ENCODE measurements at regions of chr4 and their contacts with region 1.

Region 1: DNA sequence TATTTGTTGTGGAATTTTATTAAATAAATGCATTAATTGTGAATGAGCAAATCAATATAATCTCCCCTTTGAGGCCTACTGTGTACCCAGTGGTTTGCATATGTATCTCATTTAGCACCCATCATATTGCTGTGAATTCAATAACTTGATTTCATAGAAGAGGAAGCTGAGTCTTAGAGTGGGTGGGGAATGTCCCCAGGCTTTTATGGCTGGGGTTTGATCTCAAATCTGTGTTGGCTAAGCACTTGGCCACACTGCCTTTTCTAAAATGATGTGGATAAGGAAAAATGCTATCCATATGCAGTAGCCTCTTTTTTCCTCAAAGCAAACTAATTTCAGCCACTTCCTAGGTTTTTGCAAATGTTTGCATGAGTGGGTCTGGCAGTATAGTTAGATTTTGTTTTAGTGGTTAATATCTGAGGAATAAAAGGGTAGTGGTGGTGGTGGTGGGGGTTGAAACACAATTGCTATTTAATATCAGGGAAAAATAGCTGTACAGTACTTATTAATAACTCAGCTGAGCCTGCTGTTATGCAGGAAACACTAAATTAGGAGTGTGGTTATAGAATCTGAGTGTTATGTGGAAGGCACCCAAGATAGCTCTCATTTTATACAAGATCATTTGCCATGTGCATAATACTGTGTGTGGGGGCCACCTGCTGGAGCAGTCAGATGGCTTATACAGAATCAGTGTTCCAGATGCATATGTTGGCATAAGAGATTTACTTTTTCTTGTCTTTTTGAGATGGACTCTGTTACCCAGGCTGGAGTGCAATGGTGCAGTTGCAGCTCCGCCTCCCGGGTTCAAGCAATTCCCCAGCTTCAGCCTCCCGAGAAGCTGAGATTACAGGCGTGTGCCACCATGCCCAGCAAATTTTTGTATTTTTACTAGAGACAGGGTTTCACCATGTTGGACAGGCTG is 108.0 kb downstream of the TMEM131L start:
- DNase-seq: peak; percentile 29 to 84 (median 73)
- ATAC-seq: peak; percentile 96
- H3K4me3 ChIP-seq: no peak overlapping the region
- H3K4me3 Mint-ChIP-seq: peak overlapping the region; percentile 9
- H3K27ac ChIP-seq: peak overlapping the region in 1 of 2 experiments; percentile 29
- H3K27ac Mint-ChIP-seq: peak overlapping the region; percentile 81
- H3K4me1 ChIP-seq: peaks cover 27% of the 10 kb centered on the region
- H3K4me1 Mint-ChIP-seq: peaks cover 61% of the 10 kb centered on the region
- H3K27me3 ChIP-seq: no peaks in the 10 kb centered on the region
- H3K27me3 Mint-ChIP-seq: no peaks in the 10 kb centered on the region
- CTCF ChIP-seq: peak; percentile 73

Region 2: GRCh38 chr4:153142700-153143438 is 431.3 kb before region 1 on chr4:
- CTCF ChIA-PET with region 1: interaction called, 5 read pairs
- POLR2A ChIA-PET with region 1: no interaction called
- intact Hi-C with region 1: loop called (anchors 2 to 5 kb)
- DNase-seq: peak in 8 of 9 experiments; percentile 19 to 70 (median 50)
- ATAC-seq: peak; percentile 68
- H3K4me3 ChIP-seq: no peak overlapping the region
- H3K4me3 Mint-ChIP-seq: no peak overlapping the region
- H3K27ac ChIP-seq: no peak overlapping the region
- H3K27ac Mint-ChIP-seq: no peak overlapping the region
- H3K4me1 ChIP-seq: no peaks in the 10 kb centered on the region
- H3K4me1 Mint-ChIP-seq: no peaks in the 10 kb centered on the region
- H3K27me3 ChIP-seq: no peaks in the 10 kb centered on the region
- H3K27me3 Mint-ChIP-seq: peaks cover 5% of the 10 kb centered on the region
- CTCF ChIP-seq: peak; percentile 62

Region 3: DNA sequence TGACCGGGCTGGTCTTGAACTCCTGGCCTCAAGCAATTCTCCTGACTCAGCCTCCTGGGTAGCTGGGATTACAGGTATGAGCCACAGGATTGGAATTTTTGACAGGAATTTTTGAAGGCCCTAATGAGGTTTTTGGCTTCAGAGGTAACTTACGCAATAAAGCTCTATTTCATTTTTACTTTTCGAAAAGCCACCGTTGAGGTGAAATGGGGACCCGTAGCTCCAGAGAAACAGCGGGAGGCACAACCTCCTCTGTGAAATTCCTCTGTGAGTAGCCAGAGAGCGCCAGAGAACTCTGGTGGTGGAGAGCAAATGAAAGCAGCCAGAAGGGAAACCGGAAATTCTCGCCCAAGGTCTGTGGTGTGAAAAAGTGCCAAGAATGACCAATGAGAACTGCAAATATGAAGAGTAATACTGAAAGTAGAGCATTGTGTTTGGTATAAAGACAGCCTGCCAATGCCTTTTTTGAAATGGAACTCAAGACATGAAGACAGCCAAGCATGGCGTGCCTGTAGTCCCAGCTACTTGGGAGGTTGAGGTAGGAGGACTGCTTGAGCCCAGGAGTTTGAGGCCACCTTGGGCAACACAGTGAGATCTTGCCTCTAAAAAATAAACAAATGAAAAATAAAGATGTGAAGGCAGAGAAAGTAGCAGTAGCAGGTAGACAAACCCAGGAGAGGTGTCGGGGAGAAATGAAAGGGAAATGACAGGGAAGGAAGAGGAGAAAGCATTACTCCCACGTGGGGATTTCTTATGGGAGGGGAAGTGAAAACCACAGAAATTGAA is 141.0 kb before region 1 on chr4:
- CTCF ChIA-PET with region 1: interaction called, 38 read pairs
- POLR2A ChIA-PET with region 1: interaction called, 8 read pairs
- intact Hi-C with region 1: loop called (anchors 1 kb)
- DNase-seq: peak; percentile 29 to 88 (median 61)
- ATAC-seq: peak; percentile 78
- H3K4me3 ChIP-seq: peak overlapping the region; percentile 0 to 46
- H3K4me3 Mint-ChIP-seq: peak overlapping the region; percentile 77
- H3K27ac ChIP-seq: peak overlapping the region; percentile 6 to 63
- H3K27ac Mint-ChIP-seq: peak overlapping the region; percentile 73
- H3K4me1 ChIP-seq: peaks cover 52% of the 10 kb centered on the region
- H3K4me1 Mint-ChIP-seq: peaks cover 72% of the 10 kb centered on the region
- H3K27me3 ChIP-seq: no peaks in the 10 kb centered on the region
- H3K27me3 Mint-ChIP-seq: no peaks in the 10 kb centered on the region
- CTCF ChIP-seq: peak; percentile 59

Region 4: GRCh38 chr4:153466081-153466948 is 107.8 kb before region 1 on chr4 and contains the start of gene TMEM131L:
- CTCF ChIA-PET with region 1: interaction called, 36 read pairs
- POLR2A ChIA-PET with region 1: interaction called, 26 read pairs
- intact Hi-C with region 1: loop called (anchors 1 to 10 kb)
- DNase-seq: peak; percentile 58 to 92 (median 69)
- ATAC-seq: peak; percentile 77
- H3K4me3 ChIP-seq: peak within 1 kb of the TSS; percentile 77 to 94
- H3K4me3 Mint-ChIP-seq: peak within 1 kb of the TSS; percentile 95
- H3K27ac ChIP-seq: peak within 1 kb of the TSS; percentile 76 to 92
- H3K27ac Mint-ChIP-seq: peak within 1 kb of the TSS; percentile 96
- H3K4me1 ChIP-seq: peaks cover 40% of the 10 kb centered on the region
- H3K4me1 Mint-ChIP-seq: peaks cover 44% of the 10 kb centered on the region
- H3K27me3 ChIP-seq: no peaks in the 10 kb centered on the region
- H3K27me3 Mint-ChIP-seq: no peaks in the 10 kb centered on the region
- CTCF ChIP-seq: peak; percentile 35
- total RNA-seq, gene TMEM131L: 80.8 to 83.1 TPM

Region 5: DNA sequence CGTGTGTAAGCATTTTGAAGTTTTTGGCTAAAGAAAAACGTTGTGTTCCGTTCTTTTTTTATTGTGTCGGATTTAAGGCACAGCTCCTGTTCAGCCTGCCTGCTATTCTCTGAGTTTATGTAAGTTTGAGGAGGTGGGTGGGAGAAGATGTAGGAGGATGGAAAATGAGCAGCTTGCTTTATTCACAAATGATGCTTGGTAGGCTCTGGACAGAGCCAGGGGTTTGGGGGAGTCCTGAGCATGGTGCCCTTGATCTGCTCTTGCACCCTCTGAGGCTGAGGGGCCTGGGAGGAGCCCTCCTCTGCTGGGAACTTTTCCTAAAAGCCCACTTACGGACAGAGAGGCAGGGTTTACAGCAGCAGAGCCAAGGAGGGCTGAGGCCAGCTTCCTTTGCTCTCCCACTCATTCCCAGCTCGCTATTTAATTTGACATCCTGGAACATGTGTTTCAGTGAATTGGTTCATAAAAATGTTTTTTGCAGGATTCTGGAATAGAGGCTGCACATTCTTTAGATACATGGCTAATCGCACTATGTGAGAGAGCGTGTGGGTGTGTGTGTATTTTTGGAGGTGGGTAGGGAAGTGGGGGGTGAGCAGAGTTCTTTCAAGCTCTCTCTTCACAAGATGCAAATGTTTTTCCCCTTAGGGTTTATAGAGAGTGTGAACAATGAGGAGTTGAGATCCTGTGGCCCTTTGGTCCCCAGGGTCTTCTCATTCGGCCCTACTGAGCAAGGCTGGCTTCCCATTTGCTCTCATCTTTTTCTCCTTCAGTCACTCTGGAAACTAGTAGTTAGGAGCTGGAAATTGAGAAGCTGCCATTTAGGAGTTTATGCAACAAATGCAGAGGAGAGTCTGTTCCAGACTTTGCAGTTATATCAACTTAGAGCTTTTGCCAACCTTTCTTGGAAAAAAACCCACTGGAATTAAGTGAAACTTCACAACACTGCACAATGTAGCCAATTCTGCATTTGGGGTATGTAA is 75.9 kb before region 1 on chr4:
- CTCF ChIA-PET with region 1: interaction called, 11 read pairs
- POLR2A ChIA-PET with region 1: interaction called, 3 read pairs
- intact Hi-C with region 1: no loop called
- DNase-seq: peak in 2 of 9 experiments; percentile 27 to 62
- ATAC-seq: peak; percentile 15
- H3K4me3 ChIP-seq: peak overlapping the region in 1 of 2 experiments; percentile 37
- H3K4me3 Mint-ChIP-seq: peak overlapping the region; percentile 66
- H3K27ac ChIP-seq: peak overlapping the region; percentile 54 to 78
- H3K27ac Mint-ChIP-seq: peak overlapping the region; percentile 97
- H3K4me1 ChIP-seq: peaks cover 92% of the 10 kb centered on the region
- H3K4me1 Mint-ChIP-seq: peaks cover 90% of the 10 kb centered on the region
- H3K27me3 ChIP-seq: no peaks in the 10 kb centered on the region
- H3K27me3 Mint-ChIP-seq: no peaks in the 10 kb centered on the region
- CTCF ChIP-seq: no peak

Region 6: GRCh38 chr4:153549401-153549800 is 24.7 kb before region 1 on chr4:
- CTCF ChIA-PET with region 1: interaction called, 11 read pairs
- POLR2A ChIA-PET with region 1: interaction called, 4 read pairs
- intact Hi-C with region 1: no loop called
- DNase-seq: no peak
- ATAC-seq: no peak
- H3K4me3 ChIP-seq: no peak overlapping the region
- H3K4me3 Mint-ChIP-seq: no peak overlapping the region
- H3K27ac ChIP-seq: peak overlapping the region in 1 of 2 experiments; percentile 14
- H3K27ac Mint-ChIP-seq: peak overlapping the region; percentile 55
- H3K4me1 ChIP-seq: peaks cover 7% of the 10 kb centered on the region
- H3K4me1 Mint-ChIP-seq: peaks cover 59% of the 10 kb centered on the region
- H3K27me3 ChIP-seq: no peaks in the 10 kb centered on the region
- H3K27me3 Mint-ChIP-seq: no peaks in the 10 kb centered on the region
- CTCF ChIP-seq: no peak

Region 7: DNA sequence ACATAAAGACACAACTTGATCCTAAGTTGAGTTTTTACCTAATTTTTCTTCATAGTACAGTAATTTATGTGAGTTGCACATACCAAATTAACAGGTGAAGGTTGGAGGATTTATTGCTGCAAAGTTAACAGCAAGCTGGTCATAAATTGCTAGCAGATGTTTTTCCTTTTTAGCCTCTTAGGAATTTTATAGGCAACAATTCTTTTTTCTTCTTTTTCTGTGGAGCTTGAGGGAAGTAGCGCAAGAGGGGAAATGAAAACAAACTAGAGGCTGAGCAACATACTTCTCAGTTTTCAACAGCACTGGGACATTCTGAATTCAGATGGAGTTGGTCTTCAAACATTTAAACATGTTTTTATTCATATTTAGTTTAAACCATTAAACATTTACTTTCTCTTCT is 46.2 kb after region 1 on chr4:
- CTCF ChIA-PET with region 1: no interaction called
- POLR2A ChIA-PET with region 1: no interaction called
- intact Hi-C with region 1: no loop called
- DNase-seq: no peak
- ATAC-seq: no peak
- H3K4me3 ChIP-seq: no peak overlapping the region
- H3K4me3 Mint-ChIP-seq: no peak overlapping the region
- H3K27ac ChIP-seq: no peak overlapping the region
- H3K27ac Mint-ChIP-seq: peak overlapping the region; percentile 7
- H3K4me1 ChIP-seq: no peaks in the 10 kb centered on the region
- H3K4me1 Mint-ChIP-seq: peaks cover 17% of the 10 kb centered on the region
- H3K27me3 ChIP-seq: no peaks in the 10 kb centered on the region
- H3K27me3 Mint-ChIP-seq: no peaks in the 10 kb centered on the region
- CTCF ChIP-seq: no peak

Region 8: DNA sequence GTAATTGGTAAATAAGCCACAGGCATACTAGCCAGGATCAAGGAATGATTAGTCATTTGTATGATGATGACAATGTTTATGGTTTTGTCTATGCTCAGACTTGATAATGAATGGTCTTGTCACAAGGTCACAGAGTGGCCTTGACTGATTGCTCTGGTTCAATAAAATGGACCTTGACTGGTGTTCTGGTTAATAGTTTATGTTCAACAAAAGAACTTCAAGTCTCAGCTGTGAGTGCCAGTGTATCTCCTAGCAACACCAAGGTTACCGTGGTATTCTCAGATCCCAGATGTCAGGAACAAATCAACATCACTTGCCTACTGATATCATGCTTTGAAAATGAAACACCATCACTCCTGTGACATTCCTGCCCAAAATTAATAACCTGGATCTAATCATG is 1153.4 kb after region 1 on chr4:
- CTCF ChIA-PET with region 1: no interaction called
- POLR2A ChIA-PET with region 1: no interaction called
- intact Hi-C with region 1: no loop called
- DNase-seq: no peak
- ATAC-seq: no peak
- H3K4me3 ChIP-seq: no peak overlapping the region
- H3K4me3 Mint-ChIP-seq: no peak overlapping the region
- H3K27ac ChIP-seq: no peak overlapping the region
- H3K27ac Mint-ChIP-seq: no peak overlapping the region
- H3K4me1 ChIP-seq: no peaks in the 10 kb centered on the region
- H3K4me1 Mint-ChIP-seq: no peaks in the 10 kb centered on the region
- H3K27me3 ChIP-seq: no peaks in the 10 kb centered on the region
- H3K27me3 Mint-ChIP-seq: peaks cover 11% of the 10 kb centered on the region
- CTCF ChIP-seq: no peak